Activated T-helper 1 cell treated with anti-CD3 and anti-CD28 coated beads, Interleukin-12 subunit alpha, Interleukin-12 subunit beta, Interleukin-2, Interleukin-4 antibody, amounts not matched to agents 30 ng/mL and 10 ng/mL and 1 ng/mL, durations not matched to agents 14 hours and 24 hours and 36 hours (primary cell): ENCODE measurements at regions of chr2 and their contacts with region 1.

Region 1: DNA sequence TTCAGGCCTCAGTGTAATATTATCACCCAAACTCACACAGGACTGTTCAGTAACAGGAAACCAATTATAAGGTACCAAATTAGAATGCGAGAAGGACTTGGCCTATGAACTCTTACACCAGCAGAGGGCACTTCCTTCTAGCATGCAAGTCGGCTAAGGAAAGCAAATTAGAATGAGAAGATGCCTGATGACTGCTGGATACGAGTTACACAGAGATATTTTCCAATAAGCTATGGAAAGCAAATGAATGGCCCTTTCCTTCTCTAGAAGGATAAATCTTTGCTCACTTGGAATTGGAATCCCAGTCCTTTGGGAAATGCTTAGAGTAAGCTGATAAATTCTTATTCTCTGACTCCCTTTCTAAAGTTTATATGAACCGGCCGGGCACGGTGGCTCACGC is 109.8 kb downstream of the AP1S3 start:
- DNase-seq: peak; percentile 1
- H3K4me3 Mint-ChIP-seq: no peak overlapping the region
- H3K27ac Mint-ChIP-seq: no peak overlapping the region
- H3K4me1 Mint-ChIP-seq: no peaks in the 10 kb centered on the region
- H3K27me3 Mint-ChIP-seq: no peaks in the 10 kb centered on the region

Region 2: DNA sequence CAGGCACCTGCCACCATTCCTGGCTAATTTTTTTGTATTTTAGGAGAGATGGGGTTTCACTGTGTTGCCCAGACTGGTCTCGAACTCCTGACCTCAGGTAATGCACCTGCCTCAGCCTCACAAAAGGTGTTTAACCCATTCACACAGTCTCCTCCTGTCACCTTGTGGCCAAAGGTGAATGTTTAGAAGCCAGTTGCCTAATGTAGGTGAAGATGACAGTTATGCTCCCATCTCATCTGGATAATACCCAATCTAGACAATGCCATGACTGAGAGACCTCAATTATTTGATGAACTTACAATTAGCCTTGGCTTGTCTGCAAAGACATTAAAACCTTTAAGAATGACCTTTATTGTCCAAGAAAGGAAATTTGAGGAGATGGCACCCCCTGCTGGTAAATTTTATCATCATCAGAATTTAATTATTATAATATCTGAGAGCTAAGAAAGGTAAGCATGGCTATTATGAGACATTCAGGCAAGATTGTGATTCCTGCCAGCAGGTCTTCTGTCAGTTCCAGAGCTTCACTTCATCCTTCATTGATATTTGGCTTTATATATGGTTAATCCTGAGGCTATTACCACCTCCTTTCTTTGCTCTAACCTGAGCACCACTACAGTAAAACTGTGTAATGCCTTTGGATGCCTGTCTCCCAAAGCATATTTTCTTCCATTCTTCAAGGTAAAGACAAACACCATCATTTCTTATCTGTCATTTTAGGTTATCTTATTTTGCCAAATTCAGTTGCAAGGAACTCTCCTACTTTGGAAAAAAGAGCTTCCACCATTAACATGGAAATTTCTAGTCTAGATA is 556.8 kb after region 1 on chr2:
- intact Hi-C with region 1: loop called (anchors 1 kb)
- DNase-seq: no peak
- H3K4me3 Mint-ChIP-seq: no peak overlapping the region
- H3K27ac Mint-ChIP-seq: no peak overlapping the region
- H3K4me1 Mint-ChIP-seq: no peaks in the 10 kb centered on the region
- H3K27me3 Mint-ChIP-seq: peaks cover 21% of the 10 kb centered on the region